Activated naive CD4-positive, alpha-beta T cell treated with anti-CD3 and anti-CD28 coated beads for 36 hours (primary cell): ENCODE measurements at regions of chr6 and their contacts with region 1.

Region 1: GRCh38 chr6:25992413-25993037 is 29.9 kb downstream of the TRIM38 start:
- DNase-seq: peak; percentile 95
- H3K4me3 Mint-ChIP-seq: peak overlapping the region; percentile 95
- H3K27ac Mint-ChIP-seq: peak overlapping the region; percentile 91
- H3K4me1 Mint-ChIP-seq: peaks cover 24% of the 10 kb centered on the region
- H3K27me3 Mint-ChIP-seq: no peaks in the 10 kb centered on the region

Region 2: GRCh38 chr6:25617997-25618396 is 374.5 kb before region 1 on chr6:
- CTCF ChIA-PET with region 1: no interaction called
- intact Hi-C with region 1: loop called (anchors 10 kb)
- DNase-seq: no peak
- H3K4me3 Mint-ChIP-seq: no peak overlapping the region
- H3K27ac Mint-ChIP-seq: no peak overlapping the region
- H3K4me1 Mint-ChIP-seq: no peaks in the 10 kb centered on the region
- H3K27me3 Mint-ChIP-seq: no peaks in the 10 kb centered on the region

Region 3: DNA sequence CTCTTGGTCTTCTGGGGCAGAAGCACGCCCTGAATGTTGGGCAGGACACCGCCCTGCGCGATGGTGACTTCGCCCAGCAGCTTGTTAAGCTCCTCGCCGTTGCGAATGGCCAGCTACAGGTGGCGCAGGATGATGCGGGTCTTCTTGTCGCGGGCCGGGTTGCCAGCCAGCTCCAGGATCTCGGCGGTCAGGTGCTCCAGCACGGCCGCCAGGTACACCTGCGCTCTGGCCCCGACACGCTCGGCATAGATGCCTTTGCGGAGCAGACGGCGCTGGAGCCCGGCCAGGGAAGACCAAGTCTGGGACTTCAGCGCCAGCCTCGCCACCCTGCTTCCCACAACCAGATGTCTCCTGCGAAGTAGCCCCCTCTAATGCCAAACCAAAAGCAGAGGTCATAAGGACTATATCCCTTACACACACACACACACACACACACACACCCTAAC is 110.5 kb before region 1 on chr6:
- CTCF ChIA-PET with region 1: interaction called, 3 read pairs
- intact Hi-C with region 1: loop called (anchors 2 kb)
- DNase-seq: peak; percentile 49
- H3K4me3 Mint-ChIP-seq: peak overlapping the region; percentile 72
- H3K27ac Mint-ChIP-seq: no peak overlapping the region
- H3K4me1 Mint-ChIP-seq: no peaks in the 10 kb centered on the region
- H3K27me3 Mint-ChIP-seq: no peaks in the 10 kb centered on the region

Region 4: DNA sequence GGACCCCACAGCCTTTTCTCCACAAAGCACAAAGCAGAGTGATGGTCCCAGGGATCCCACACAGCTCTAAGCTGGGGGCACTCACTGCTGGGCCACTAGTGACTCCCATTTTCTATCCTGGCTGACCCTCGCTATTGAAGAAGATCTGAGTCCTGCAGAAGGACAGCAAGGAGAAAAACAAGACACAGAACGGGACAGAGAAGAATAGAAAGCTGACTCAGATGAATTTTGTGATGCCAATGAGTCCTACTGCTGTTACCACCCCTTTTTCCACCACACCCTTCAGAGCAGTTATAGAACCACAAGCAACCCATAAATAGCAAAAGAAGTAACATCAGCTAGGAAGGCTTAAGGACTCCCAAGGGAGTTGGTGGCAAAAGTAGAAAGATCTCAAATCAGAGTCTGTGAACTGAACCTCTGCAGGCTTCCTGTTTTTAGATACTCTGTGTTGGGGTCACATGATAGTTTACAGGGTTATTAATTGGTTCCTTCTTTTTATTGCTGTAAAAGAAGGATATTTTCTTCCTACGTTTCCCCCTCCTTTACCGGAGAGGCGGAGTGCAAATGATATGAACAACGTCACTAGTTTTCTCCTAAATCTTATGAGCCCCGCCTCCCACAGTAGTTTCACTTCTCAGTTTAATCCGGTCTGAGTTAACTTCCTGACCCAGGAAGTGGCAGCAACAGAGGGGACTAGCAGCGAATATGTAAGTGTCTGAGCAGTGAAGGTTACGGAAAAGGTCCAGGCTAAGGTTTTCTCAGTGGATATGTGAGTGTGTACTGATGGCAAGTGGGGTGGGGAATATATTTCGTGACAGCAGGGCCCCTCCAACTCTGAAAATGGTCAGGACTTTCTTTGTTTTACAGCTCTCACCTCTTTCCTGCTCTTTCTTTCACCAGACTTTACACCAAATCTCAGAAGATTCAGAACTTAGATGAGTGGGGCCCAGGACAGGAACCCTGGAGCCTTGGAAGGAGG is 30.1 kb before region 1 on chr6 and contains the start of gene TRIM38:
- CTCF ChIA-PET with region 1: interaction called, 16 read pairs
- intact Hi-C with region 1: loop called (anchors 1 kb)
- DNase-seq: peak; percentile 91
- H3K4me3 Mint-ChIP-seq: peak within 1 kb of the TSS; percentile 99
- H3K27ac Mint-ChIP-seq: peak within 1 kb of the TSS; percentile 99
- H3K4me1 Mint-ChIP-seq: peaks cover 76% of the 10 kb centered on the region
- H3K27me3 Mint-ChIP-seq: no peaks in the 10 kb centered on the region
- total RNA-seq, gene TRIM38: 19.1 to 19.7 TPM

Region 5: GRCh38 chr6:25981568-25982263 is 10.8 kb before region 1 on chr6:
- CTCF ChIA-PET with region 1: interaction called, 16 read pairs
- intact Hi-C with region 1: loop called (anchors 2 kb)
- DNase-seq: no peak
- H3K4me3 Mint-ChIP-seq: no peak overlapping the region
- H3K27ac Mint-ChIP-seq: peak overlapping the region; percentile 17
- H3K4me1 Mint-ChIP-seq: peaks cover 23% of the 10 kb centered on the region
- H3K27me3 Mint-ChIP-seq: no peaks in the 10 kb centered on the region

Region 6: DNA sequence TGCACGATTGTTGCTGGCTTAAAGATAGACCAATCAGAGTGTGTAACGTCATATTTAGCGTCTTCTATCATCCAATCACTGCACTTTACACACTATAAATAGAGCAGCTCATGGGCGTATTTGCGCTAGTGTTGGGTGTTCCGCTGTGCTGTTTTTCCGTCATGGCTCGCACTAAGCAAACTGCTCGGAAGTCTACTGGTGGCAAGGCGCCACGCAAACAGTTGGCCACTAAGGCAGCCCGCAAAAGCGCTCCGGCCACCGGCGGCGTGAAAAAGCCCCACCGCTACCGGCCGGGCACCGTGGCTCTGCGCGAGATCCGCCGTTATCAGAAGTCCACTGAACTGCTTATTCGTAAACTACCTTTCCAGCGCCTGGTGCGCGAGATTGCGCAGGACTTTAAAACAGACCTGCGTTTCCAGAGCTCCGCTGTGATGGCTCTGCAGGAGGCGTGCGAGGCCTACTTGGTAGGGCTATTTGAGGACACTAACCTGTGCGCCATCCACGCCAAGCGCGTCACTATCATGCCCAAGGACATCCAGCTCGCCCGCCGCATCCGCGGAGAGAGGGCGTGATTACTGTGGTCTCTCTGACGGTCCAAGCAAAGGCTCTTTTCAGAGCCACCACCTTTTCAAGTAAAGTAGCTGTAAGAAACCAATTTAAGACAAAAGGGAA is 27.9 kb after region 1 on chr6:
- CTCF ChIA-PET with region 1: interaction called, 22 read pairs
- intact Hi-C with region 1: loop called (anchors 1 kb)
- DNase-seq: peak; percentile 87
- H3K4me3 Mint-ChIP-seq: peak overlapping the region; percentile 96
- H3K27ac Mint-ChIP-seq: peak overlapping the region; percentile 100
- H3K4me1 Mint-ChIP-seq: peaks cover 26% of the 10 kb centered on the region
- H3K27me3 Mint-ChIP-seq: no peaks in the 10 kb centered on the region

Region 7: GRCh38 chr6:26258200-26258977 is 265.9 kb after region 1 on chr6:
- CTCF ChIA-PET with region 1: no interaction called
- intact Hi-C with region 1: no loop called
- DNase-seq: no peak
- H3K4me3 Mint-ChIP-seq: no peak overlapping the region
- H3K27ac Mint-ChIP-seq: no peak overlapping the region
- H3K4me1 Mint-ChIP-seq: peaks cover under 1% of the 10 kb centered on the region
- H3K27me3 Mint-ChIP-seq: peaks cover 3% of the 10 kb centered on the region